ENCODE measurements at regions of chr21 and their contacts with region 1.

Region 1: GRCh38 chr21:38219049-38219628 is 37.7 kb upstream of the KCNJ15 start:
- DNase-seq: peak; percentile 24 to 54 (median 44)
- H3K4me3 ChIP-seq: no peak overlapping the region
- H3K4me3 Mint-ChIP-seq: no peak overlapping the region
- H3K27ac ChIP-seq: no peak overlapping the region
- H3K27ac Mint-ChIP-seq: peak overlapping the region in 3 of 7 donors; percentile 36 to 75 (median 51)
- H3K4me1 ChIP-seq: no peaks in the 10 kb centered on the region
- H3K4me1 Mint-ChIP-seq: peaks cover 0 to 5% (median 2%) of the 10 kb centered on the region in 4 donors
- H3K27me3 ChIP-seq: no peaks in the 10 kb centered on the region
- H3K27me3 Mint-ChIP-seq: no peaks in the 10 kb centered on the region

Region 2: DNA sequence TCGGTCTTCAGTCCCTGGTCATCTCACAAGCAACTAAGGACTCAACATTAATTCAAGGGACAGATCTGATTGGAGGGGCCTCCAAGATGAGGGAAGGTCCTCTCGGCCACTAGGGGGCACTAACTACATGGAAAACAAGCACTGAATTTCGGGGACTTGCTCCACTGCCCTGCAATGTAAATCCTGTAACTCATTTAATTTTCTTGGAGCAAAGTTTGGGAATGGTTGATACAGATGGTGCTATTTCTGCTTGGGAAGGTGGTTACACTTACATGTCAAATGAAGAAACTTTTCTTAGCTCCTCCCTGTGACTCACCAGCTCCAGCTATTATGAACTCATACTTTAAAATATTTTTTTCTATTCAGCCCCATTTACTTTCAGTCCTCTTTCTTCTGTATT is 59.8 kb before region 1 on chr21:
- CTCF ChIA-PET with region 1: interaction called, 6 read pairs
- POLR2A ChIA-PET with region 1: no interaction called
- intact Hi-C with region 1: loop called (anchors 1 kb)
- DNase-seq: peak; percentile 6 to 46 (median 38)
- H3K4me3 ChIP-seq: no peak overlapping the region
- H3K4me3 Mint-ChIP-seq: peak overlapping the region in 1 of 8 donors; percentile 12
- H3K27ac ChIP-seq: no peak overlapping the region
- H3K27ac Mint-ChIP-seq: no peak overlapping the region
- H3K4me1 ChIP-seq: no peaks in the 10 kb centered on the region
- H3K4me1 Mint-ChIP-seq: no peaks in the 10 kb centered on the region
- H3K27me3 ChIP-seq: no peaks in the 10 kb centered on the region
- H3K27me3 Mint-ChIP-seq: peaks cover 5 to 8% of the 10 kb centered on the region in 2 donors

Region 3: GRCh38 chr21:38205940-38206339 is 13.2 kb before region 1 on chr21:
- CTCF ChIA-PET with region 1: interaction called, 40 read pairs
- POLR2A ChIA-PET with region 1: no interaction called
- intact Hi-C with region 1: no loop called
- DNase-seq: no peak
- H3K4me3 ChIP-seq: no peak overlapping the region
- H3K4me3 Mint-ChIP-seq: no peak overlapping the region
- H3K27ac ChIP-seq: no peak overlapping the region
- H3K27ac Mint-ChIP-seq: no peak overlapping the region
- H3K4me1 ChIP-seq: no peaks in the 10 kb centered on the region
- H3K4me1 Mint-ChIP-seq: peaks cover 0 to 3% (median 1%) of the 10 kb centered on the region in 4 donors
- H3K27me3 ChIP-seq: no peaks in the 10 kb centered on the region
- H3K27me3 Mint-ChIP-seq: peaks cover 11 to 15% of the 10 kb centered on the region in 2 donors

Region 4: DNA sequence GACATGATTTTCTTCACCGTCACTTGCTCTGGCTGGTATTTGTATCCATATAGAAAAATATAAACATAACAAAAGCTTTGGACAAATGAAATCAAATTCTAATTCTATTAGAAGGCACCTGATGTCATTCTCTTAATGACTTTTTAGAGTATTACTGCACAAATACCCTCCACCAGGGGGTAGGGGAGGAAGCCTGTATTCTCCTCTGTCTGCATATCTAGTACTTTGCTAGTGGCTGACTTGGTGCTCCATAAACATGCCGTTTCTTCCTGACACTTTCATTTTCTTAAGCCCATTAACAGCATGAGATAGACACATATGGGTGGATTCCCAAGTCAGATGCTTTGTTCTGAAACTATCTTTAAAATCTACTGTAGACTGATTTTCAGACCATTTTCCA is 17.1 kb after region 1 on chr21:
- CTCF ChIA-PET with region 1: interaction called, 32 read pairs
- POLR2A ChIA-PET with region 1: no interaction called
- intact Hi-C with region 1: no loop called
- DNase-seq: no peak
- H3K4me3 ChIP-seq: no peak overlapping the region
- H3K4me3 Mint-ChIP-seq: no peak overlapping the region
- H3K27ac ChIP-seq: no peak overlapping the region
- H3K27ac Mint-ChIP-seq: no peak overlapping the region
- H3K4me1 ChIP-seq: no peaks in the 10 kb centered on the region
- H3K4me1 Mint-ChIP-seq: no peaks in the 10 kb centered on the region
- H3K27me3 ChIP-seq: no peaks in the 10 kb centered on the region
- H3K27me3 Mint-ChIP-seq: no peaks in the 10 kb centered on the region

Region 5: GRCh38 chr21:38333301-38334272 is 114.4 kb after region 1 on chr21:
- CTCF ChIA-PET with region 1: interaction called, 7 read pairs
- POLR2A ChIA-PET with region 1: no interaction called
- intact Hi-C with region 1: loop called (anchors 1 kb)
- DNase-seq: no peak
- H3K4me3 ChIP-seq: no peak overlapping the region
- H3K4me3 Mint-ChIP-seq: no peak overlapping the region
- H3K27ac ChIP-seq: no peak overlapping the region
- H3K27ac Mint-ChIP-seq: no peak overlapping the region
- H3K4me1 ChIP-seq: no peaks in the 10 kb centered on the region
- H3K4me1 Mint-ChIP-seq: no peaks in the 10 kb centered on the region
- H3K27me3 ChIP-seq: no peaks in the 10 kb centered on the region
- H3K27me3 Mint-ChIP-seq: no peaks in the 10 kb centered on the region

Region 6: DNA sequence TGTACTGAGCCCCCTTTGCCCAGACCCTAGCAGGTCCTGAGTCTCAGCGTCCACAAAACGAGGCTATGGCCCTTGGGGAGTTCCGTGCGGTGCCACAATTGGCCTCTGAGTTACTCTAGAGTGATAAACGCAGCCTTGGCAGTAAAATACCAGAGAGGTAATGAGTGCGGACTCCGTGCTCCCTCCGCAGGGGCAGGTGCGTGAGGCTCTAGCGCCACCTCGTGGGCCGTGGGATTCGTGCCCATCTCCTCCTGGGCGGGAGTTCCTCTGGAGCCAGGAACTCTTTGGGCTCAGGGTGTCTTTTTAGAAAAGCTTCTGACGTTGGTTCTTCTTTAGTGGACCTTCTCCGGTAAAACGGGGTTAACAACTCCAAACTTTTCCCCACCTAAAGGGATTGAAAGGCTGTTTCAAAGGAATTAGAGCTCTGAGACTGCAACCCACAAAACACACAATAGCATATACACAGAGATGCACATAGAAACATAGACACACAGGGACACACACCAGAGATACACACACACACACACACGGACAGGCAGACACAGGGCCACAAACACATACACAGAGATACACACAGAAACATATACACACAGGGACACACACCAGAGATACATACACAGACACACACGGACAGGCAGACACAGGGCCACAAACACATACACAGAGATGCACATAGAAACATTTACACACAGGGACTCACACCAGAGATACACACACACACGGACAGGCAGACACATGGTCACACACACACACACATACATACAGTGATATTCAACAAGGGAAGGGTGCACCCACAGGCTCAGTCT is 137.1 kb after region 1 on chr21:
- CTCF ChIA-PET with region 1: interaction called, 137 read pairs
- POLR2A ChIA-PET with region 1: no interaction called
- intact Hi-C with region 1: loop called (anchors 1 kb)
- DNase-seq: peak; percentile 41 to 52 (median 51)
- H3K4me3 ChIP-seq: no peak overlapping the region
- H3K4me3 Mint-ChIP-seq: no peak overlapping the region
- H3K27ac ChIP-seq: no peak overlapping the region
- H3K27ac Mint-ChIP-seq: no peak overlapping the region
- H3K4me1 ChIP-seq: no peaks in the 10 kb centered on the region
- H3K4me1 Mint-ChIP-seq: no peaks in the 10 kb centered on the region
- H3K27me3 ChIP-seq: no peaks in the 10 kb centered on the region
- H3K27me3 Mint-ChIP-seq: peaks cover 3 to 12% of the 10 kb centered on the region in 2 donors

Region 7: GRCh38 chr21:39137248-39138178 is 918.4 kb after region 1 on chr21:
- CTCF ChIA-PET with region 1: no interaction called
- POLR2A ChIA-PET with region 1: no interaction called
- intact Hi-C with region 1: loop called (anchors 5 kb)
- DNase-seq: no peak
- H3K4me3 ChIP-seq: no peak overlapping the region
- H3K4me3 Mint-ChIP-seq: no peak overlapping the region
- H3K27ac ChIP-seq: no peak overlapping the region
- H3K27ac Mint-ChIP-seq: no peak overlapping the region
- H3K4me1 ChIP-seq: no peaks in the 10 kb centered on the region
- H3K4me1 Mint-ChIP-seq: no peaks in the 10 kb centered on the region
- H3K27me3 ChIP-seq: no peaks in the 10 kb centered on the region
- H3K27me3 Mint-ChIP-seq: peaks cover 2 to 9% of the 10 kb centered on the region in 2 donors